Naive thymus-derived CD4-positive, alpha-beta T cell (primary cell): ENCODE measurements at regions of chr3 and their contacts with region 1.

Region 1: GRCh38 chr3:158434412-158435038 is 136.5 kb upstream of the MLF1 start:
- DNase-seq: peak in 6 of 9 donors; percentile 1 to 23 (median 12)
- ATAC-seq: peak; percentile 42
- H3K4me3 ChIP-seq: no peak overlapping the region
- H3K4me3 Mint-ChIP-seq: no peak overlapping the region
- H3K27ac ChIP-seq: no peak overlapping the region
- H3K27ac Mint-ChIP-seq: no peak overlapping the region
- H3K4me1 ChIP-seq: no peaks in the 10 kb centered on the region
- H3K4me1 Mint-ChIP-seq: no peaks in the 10 kb centered on the region
- H3K27me3 ChIP-seq: no peaks in the 10 kb centered on the region
- H3K27me3 Mint-ChIP-seq: no peaks in the 10 kb centered on the region

Region 2: GRCh38 chr3:157532529-157533297 is 901.8 kb before region 1 on chr3:
- CTCF ChIA-PET with region 1: no interaction called
- POLR2A ChIA-PET with region 1: no interaction called
- intact Hi-C with region 1: loop called in 1 of 2 experiments (anchors 5 kb)
- DNase-seq: peak in 3 of 9 donors; percentile 4 to 5 (median 5)
- ATAC-seq: peak; percentile 59
- H3K4me3 ChIP-seq: no peak overlapping the region
- H3K4me3 Mint-ChIP-seq: no peak overlapping the region
- H3K27ac ChIP-seq: no peak overlapping the region
- H3K27ac Mint-ChIP-seq: no peak overlapping the region
- H3K4me1 ChIP-seq: no peaks in the 10 kb centered on the region
- H3K4me1 Mint-ChIP-seq: no peaks in the 10 kb centered on the region
- H3K27me3 ChIP-seq: no peaks in the 10 kb centered on the region
- H3K27me3 Mint-ChIP-seq: peaks cover 0 to 3% (median under 1%) of the 10 kb centered on the region in 5 donors

Region 3: GRCh38 chr3:157606011-157606851 is 828.3 kb before region 1 on chr3:
- CTCF ChIA-PET with region 1: interaction called, 10 read pairs
- POLR2A ChIA-PET with region 1: no interaction called
- intact Hi-C with region 1: loop called in 1 of 2 experiments (anchors 1 kb)
- DNase-seq: peak; percentile 15 to 59 (median 44)
- ATAC-seq: peak; percentile 76
- H3K4me3 ChIP-seq: no peak overlapping the region
- H3K4me3 Mint-ChIP-seq: peak overlapping the region in 4 of 10 donors; percentile 20 to 72 (median 62)
- H3K27ac ChIP-seq: no peak overlapping the region
- H3K27ac Mint-ChIP-seq: peak overlapping the region in 1 of 9 donors; percentile 20
- H3K4me1 ChIP-seq: no peaks in the 10 kb centered on the region
- H3K4me1 Mint-ChIP-seq: peaks cover 0 to 15% (median 5%) of the 10 kb centered on the region in 7 donors
- H3K27me3 ChIP-seq: no peaks in the 10 kb centered on the region
- H3K27me3 Mint-ChIP-seq: peaks cover 9 to 28% (median 13%) of the 10 kb centered on the region in 5 donors

Region 4: GRCh38 chr3:157865352-157866000 is 569.0 kb before region 1 on chr3:
- CTCF ChIA-PET with region 1: no interaction called
- POLR2A ChIA-PET with region 1: no interaction called
- intact Hi-C with region 1: loop called in 1 of 2 experiments (anchors 2 kb)
- DNase-seq: peak in 5 of 9 donors; percentile 1 to 50 (median 3)
- ATAC-seq: peak; percentile 48
- H3K4me3 ChIP-seq: no peak overlapping the region
- H3K4me3 Mint-ChIP-seq: no peak overlapping the region
- H3K27ac ChIP-seq: no peak overlapping the region
- H3K27ac Mint-ChIP-seq: no peak overlapping the region
- H3K4me1 ChIP-seq: no peaks in the 10 kb centered on the region
- H3K4me1 Mint-ChIP-seq: no peaks in the 10 kb centered on the region
- H3K27me3 ChIP-seq: no peaks in the 10 kb centered on the region
- H3K27me3 Mint-ChIP-seq: peaks cover 0 to 5% (median 3%) of the 10 kb centered on the region in 5 donors

Region 5: GRCh38 chr3:158091531-158091930 is 343.0 kb before region 1 on chr3:
- CTCF ChIA-PET with region 1: no interaction called
- POLR2A ChIA-PET with region 1: no interaction called
- intact Hi-C with region 1: loop called in 1 of 2 experiments (anchors 5 kb)
- DNase-seq: no peak
- ATAC-seq: no peak
- H3K4me3 ChIP-seq: no peak overlapping the region
- H3K4me3 Mint-ChIP-seq: no peak overlapping the region
- H3K27ac ChIP-seq: no peak overlapping the region
- H3K27ac Mint-ChIP-seq: no peak overlapping the region
- H3K4me1 ChIP-seq: no peaks in the 10 kb centered on the region
- H3K4me1 Mint-ChIP-seq: peaks cover 0 to 6% (median 0%) of the 10 kb centered on the region in 7 donors
- H3K27me3 ChIP-seq: peaks cover 8 to 24% of the 10 kb centered on the region in 2 donors
- H3K27me3 Mint-ChIP-seq: peaks cover 77 to 88% (median 84%) of the 10 kb centered on the region in 5 donors